ENCODE measurements at regions of chr14 and their contacts with region 1.

Region 1: GRCh38 chr14:102209217-102209966 is 69.7 kb downstream of the WDR20 start:
- DNase-seq: peak in 9 of 10 donors; percentile 51 to 81 (median 75)
- H3K4me3 ChIP-seq: no peak overlapping the region
- H3K27ac ChIP-seq: peak overlapping the region in 58 of 59 donors; percentile 27 to 100 (median 90)
- H3K27me3 ChIP-seq: no peaks in the 10 kb centered on the region
- CTCF ChIP-seq: peak in 52 of 56 donors; percentile 24 to 74 (median 50)

Region 2: DNA sequence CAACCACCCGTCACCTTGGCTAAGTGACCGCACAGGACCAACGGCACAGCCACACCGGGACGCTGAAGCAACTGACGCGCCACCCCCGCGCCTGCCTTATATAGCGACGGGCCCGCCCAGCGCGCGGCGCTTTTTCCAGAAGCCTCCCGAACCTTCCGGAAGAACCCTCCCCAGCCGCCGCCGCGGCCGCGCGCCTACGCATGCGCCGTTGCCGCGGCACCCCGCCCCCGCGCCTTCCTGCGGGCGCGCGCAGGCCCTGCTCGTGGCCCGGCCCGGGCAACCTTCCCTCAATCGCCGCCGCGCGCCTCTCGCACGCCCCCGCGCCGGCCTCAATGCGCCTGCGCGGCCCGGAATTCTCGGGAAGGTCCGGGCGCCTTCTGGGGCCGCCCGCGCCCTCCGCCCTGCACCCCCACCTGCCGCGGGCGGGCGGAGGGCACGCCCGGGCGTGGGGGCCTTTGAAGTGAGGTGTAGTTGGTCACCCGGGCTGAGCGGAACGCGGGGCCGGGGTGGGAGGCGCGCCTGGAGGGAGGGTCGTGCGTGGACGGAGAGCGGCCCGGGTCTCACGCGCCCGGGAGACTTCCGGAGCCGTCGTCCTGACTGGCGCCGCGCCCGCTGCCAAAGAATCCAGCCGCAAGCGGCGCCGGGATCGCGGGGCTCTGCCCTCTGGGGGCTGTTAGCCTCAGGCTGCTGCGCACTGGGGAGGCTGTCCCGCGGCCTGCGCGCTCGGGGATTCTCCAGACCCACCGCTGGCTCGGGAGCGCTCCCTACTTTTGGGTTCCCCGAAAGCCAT is 122.2 kb before region 1 on chr14 and contains the start of gene HSP90AA1:
- intact Hi-C with region 1: loop called in 1 of 2 experiments (anchors 5 kb)
- DNase-seq: peak; percentile 85 to 94 (median 90)
- H3K4me3 ChIP-seq: peak within 1 kb of the TSS; percentile 65 to 99 (median 85)
- H3K27ac ChIP-seq: peak within 1 kb of the TSS; percentile 99 to 100 (median 100)
- H3K27me3 ChIP-seq: no peaks in the 10 kb centered on the region
- CTCF ChIP-seq: peak in 47 of 56 donors; percentile 11 to 57 (median 41)
- total RNA-seq, gene HSP90AA1: 420 to 2,880 (median 848) TPM